Caco-2 (cell line): ENCODE measurements at regions of chr5 and their contacts with region 1.

Region 1: DNA sequence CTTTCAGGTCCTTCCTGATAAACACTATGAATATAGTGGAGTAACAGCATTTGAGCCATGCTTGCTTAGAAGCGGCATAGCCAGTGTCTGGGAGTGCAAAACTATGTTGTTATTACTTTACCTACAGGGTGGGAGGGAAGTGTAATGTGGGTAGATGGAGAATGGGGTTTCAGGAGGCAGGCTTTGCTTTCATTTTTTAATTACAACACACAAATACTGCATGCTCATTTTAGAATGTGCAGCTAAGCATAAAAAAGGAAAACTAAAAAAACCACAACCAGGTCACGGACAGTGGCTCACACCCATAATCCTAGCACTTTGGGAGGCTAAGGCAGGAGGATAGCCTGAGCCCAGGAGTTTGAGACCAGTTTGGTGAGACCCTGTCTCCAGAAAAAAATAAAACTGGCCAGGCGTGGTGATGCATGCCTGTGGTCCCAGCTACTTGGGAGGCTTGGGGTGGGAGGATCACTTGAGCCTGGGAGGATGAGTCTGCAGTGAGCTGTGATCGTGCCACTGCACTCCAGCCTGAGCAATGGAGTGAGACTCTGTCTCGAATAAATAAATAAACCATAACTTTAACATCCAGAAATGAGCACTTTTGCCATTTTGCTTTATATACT is 20.2 kb downstream of the HAVCR1 start:
- DNase-seq: no peak
- H3K4me3 ChIP-seq: no peak overlapping the region
- H3K4me3 Mint-ChIP-seq: no peak overlapping the region
- H3K27ac Mint-ChIP-seq: peak overlapping the region; percentile 88
- H3K4me1 ChIP-seq: peaks cover 39% of the 10 kb centered on the region
- H3K4me1 Mint-ChIP-seq: peaks cover 24% of the 10 kb centered on the region
- H3K27me3 ChIP-seq: no peaks in the 10 kb centered on the region
- H3K27me3 Mint-ChIP-seq: no peaks in the 10 kb centered on the region
- CTCF ChIP-seq: no peak

Region 2: DNA sequence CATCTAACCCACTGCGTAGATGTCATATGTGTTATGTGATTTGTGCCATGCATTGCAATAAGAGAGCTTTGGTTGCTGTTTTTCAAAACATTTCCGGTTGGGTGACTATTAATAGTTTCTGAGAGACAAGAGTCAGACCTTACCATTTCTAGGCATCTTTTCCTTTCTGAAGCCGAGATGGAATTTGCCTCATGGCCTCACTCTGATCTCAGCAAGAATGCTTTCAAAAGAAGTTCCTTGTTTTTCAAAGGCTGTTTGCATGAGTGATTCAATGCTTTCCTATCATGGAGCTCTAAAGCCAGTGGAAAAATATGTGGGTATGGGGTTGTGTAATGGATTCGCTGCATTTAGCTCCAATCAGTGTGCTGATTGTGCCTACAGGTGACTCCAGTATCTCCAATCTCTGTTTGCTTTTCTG is 391.6 kb before region 1 on chr5:
- CTCF ChIA-PET with region 1: no interaction called
- POLR2A ChIA-PET with region 1: no interaction called
- intact Hi-C with region 1: loop called (anchors 2 kb)
- DNase-seq: peak; percentile 57 to 73
- H3K4me3 ChIP-seq: no peak overlapping the region
- H3K4me3 Mint-ChIP-seq: peak overlapping the region; percentile 34
- H3K27ac Mint-ChIP-seq: peak overlapping the region; percentile 74
- H3K4me1 ChIP-seq: peaks cover 30% of the 10 kb centered on the region
- H3K4me1 Mint-ChIP-seq: peaks cover 31% of the 10 kb centered on the region
- H3K27me3 ChIP-seq: no peaks in the 10 kb centered on the region
- H3K27me3 Mint-ChIP-seq: no peaks in the 10 kb centered on the region
- CTCF ChIP-seq: no peak

Region 3: DNA sequence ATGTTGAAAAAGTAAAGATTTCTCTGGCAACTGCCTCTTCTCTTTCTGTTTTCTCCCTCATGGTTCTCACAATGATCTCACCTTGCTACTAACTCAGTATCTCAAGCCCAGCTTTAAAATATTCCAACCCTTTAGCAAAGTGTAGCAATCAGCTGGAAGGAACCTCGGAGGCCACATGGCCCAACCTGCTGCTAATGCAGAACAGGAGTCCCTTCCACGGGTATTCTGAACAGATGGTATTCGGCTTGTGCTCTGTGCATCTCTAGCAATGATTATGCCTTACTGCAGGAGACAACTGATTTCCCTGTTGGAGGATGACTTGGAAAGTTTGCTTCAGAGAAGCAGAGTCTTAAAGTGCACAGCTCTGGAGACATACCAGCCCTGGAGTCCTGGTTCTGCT is 340.4 kb before region 1 on chr5:
- CTCF ChIA-PET with region 1: no interaction called
- POLR2A ChIA-PET with region 1: no interaction called
- intact Hi-C with region 1: loop called (anchors 10 kb)
- DNase-seq: no peak
- H3K4me3 ChIP-seq: no peak overlapping the region
- H3K4me3 Mint-ChIP-seq: no peak overlapping the region
- H3K27ac Mint-ChIP-seq: no peak overlapping the region
- H3K4me1 ChIP-seq: peaks cover 14% of the 10 kb centered on the region
- H3K4me1 Mint-ChIP-seq: peaks cover 8% of the 10 kb centered on the region
- H3K27me3 ChIP-seq: no peaks in the 10 kb centered on the region
- H3K27me3 Mint-ChIP-seq: no peaks in the 10 kb centered on the region
- CTCF ChIP-seq: no peak

Region 4: GRCh38 chr5:157026789-157027424 is 11.8 kb before region 1 on chr5:
- CTCF ChIA-PET with region 1: no interaction called
- POLR2A ChIA-PET with region 1: no interaction called
- intact Hi-C with region 1: no loop called
- DNase-seq: peak; percentile 56 to 65
- H3K4me3 ChIP-seq: no peak overlapping the region
- H3K4me3 Mint-ChIP-seq: no peak overlapping the region
- H3K27ac Mint-ChIP-seq: no peak overlapping the region
- H3K4me1 ChIP-seq: peaks cover 17% of the 10 kb centered on the region
- H3K4me1 Mint-ChIP-seq: no peaks in the 10 kb centered on the region
- H3K27me3 ChIP-seq: no peaks in the 10 kb centered on the region
- H3K27me3 Mint-ChIP-seq: no peaks in the 10 kb centered on the region
- CTCF ChIP-seq: peak; percentile 85 to 86

Region 5: DNA sequence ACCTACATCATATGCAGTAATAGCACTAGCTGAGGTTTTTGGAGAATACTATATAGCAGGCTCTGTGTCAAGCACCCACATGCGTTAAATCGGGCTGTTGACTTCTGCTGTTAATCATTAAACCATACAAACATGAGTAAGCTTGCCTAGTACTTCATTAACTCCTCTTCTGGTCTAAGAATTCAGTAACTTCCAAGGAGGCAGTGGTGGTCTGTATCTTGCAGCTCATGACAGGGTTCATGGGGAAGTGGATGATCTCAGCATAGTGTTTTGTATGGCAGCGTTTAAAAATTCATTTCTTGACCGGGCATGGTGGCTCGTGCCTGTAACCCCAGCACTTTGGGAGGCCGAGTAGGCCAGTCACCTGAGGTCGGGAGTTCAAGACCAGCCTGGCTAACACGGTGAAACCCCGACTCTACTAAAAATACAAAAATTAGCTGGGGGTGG is 20.4 kb after region 1 on chr5 and contains the start of gene HAVCR1:
- CTCF ChIA-PET with region 1: interaction called, 3 read pairs
- POLR2A ChIA-PET with region 1: interaction called, 6 read pairs
- intact Hi-C with region 1: loop called (anchors 1 kb)
- DNase-seq: peak; percentile 65 to 70
- H3K4me3 ChIP-seq: peak within 1 kb of the TSS; percentile 39
- H3K4me3 Mint-ChIP-seq: peak within 1 kb of the TSS; percentile 83
- H3K27ac Mint-ChIP-seq: peak within 1 kb of the TSS; percentile 94
- H3K4me1 ChIP-seq: peaks cover 44% of the 10 kb centered on the region
- H3K4me1 Mint-ChIP-seq: peaks cover 40% of the 10 kb centered on the region
- H3K27me3 ChIP-seq: no peaks in the 10 kb centered on the region
- H3K27me3 Mint-ChIP-seq: no peaks in the 10 kb centered on the region
- CTCF ChIP-seq: no peak
- total RNA-seq, gene HAVCR1: 135 and 144 TPM in 2 replicates

Region 6: DNA sequence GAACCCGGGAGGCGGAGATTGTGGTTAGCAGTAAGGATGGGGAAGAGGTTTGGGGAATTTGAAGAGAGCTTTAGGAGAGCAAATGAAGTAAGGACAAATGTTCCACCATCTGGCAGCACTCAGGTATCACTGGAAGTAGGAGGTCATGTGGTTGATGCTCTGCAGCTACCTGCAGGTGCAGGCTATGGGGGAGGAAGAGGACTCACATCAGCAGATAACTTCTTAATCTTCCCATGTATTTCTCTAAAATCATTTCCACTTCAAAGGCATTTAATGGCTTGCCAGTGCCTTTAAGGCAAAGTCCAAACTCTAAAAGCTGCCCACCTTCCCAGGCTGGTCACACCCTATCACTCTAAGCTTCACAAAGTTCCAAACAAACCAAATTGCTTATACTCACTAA is 28.3 kb after region 1 on chr5:
- CTCF ChIA-PET with region 1: no interaction called
- POLR2A ChIA-PET with region 1: no interaction called
- intact Hi-C with region 1: loop called (anchors 1 kb)
- DNase-seq: peak in 1 of 2 experiments; percentile 55
- H3K4me3 ChIP-seq: no peak overlapping the region
- H3K4me3 Mint-ChIP-seq: no peak overlapping the region
- H3K27ac Mint-ChIP-seq: peak overlapping the region; percentile 62
- H3K4me1 ChIP-seq: peaks cover 56% of the 10 kb centered on the region
- H3K4me1 Mint-ChIP-seq: peaks cover 47% of the 10 kb centered on the region
- H3K27me3 ChIP-seq: no peaks in the 10 kb centered on the region
- H3K27me3 Mint-ChIP-seq: no peaks in the 10 kb centered on the region
- CTCF ChIP-seq: no peak